Mammary epithelial cell (primary cell): ENCODE measurements at regions of chr12 and their contacts with region 1.

Region 1: DNA sequence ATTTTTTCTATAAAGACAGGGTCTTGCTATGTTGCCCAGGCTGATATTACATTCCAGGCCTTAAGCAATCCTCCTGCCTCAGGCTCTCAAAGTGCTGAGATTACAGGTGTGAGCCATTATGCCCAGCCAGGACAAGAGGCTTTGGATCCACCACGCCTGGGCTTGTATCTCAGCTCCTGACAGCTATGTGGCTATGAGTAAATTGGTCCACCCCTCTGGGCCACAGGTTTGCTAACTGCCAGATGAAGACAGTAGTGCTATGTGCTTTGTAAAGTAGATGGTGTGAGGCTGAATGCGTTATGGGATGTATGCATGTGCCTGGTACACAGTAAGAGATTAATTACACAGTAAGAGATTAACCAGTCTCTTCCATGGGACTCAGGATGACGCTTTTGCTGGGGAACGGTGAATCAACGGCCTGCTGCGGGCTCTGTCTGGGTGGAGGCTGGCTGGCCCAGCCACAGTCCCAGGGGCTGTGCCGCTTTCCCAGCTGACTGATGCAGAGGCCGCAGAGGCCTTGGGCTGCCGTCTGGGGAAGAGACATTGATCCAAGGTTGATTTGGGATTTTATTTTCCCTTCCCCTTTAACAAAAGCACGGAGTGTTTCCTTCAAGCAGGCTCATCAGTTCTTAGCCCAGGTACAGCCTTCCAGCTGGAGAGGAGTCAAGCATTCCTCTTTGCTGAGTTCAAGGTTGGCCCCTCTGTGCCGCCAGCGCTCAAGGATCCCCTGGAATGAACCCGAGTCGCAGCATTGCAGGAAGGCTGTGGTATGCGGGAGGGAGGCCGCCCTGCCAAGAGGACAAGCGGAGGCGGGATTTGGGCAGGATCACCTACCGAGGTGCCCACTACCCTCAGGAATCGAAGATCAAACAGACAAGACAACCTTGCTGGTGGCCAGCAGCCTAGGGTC is 53.6 kb upstream of the NCOR2 start:
- DNase-seq: peak; percentile 94
- H3K4me3 ChIP-seq: no peak overlapping the region
- H3K27ac ChIP-seq: peak overlapping the region; percentile 51
- H3K4me1 ChIP-seq: peaks cover 46% of the 10 kb centered on the region
- H3K27me3 ChIP-seq: no peaks in the 10 kb centered on the region
- CTCF ChIP-seq: no peak

Region 2: GRCh38 chr12:123972457-123973401 is 648.3 kb before region 1 on chr12 and contains the starts of genes CCDC92 and ZNF664:
- CTCF ChIA-PET with region 1: no interaction called
- dilution Hi-C with region 1: no loop called
- in situ Hi-C with region 1: no loop called
- intact Hi-C with region 1: no loop called
- DNase-seq: peak; percentile 89
- H3K4me3 ChIP-seq: peak within 1 kb of the TSS; percentile 81 to 98 (median 85)
- H3K27ac ChIP-seq: peak within 1 kb of the TSS; percentile 57
- H3K4me1 ChIP-seq: peaks cover 18% of the 10 kb centered on the region
- H3K27me3 ChIP-seq: no peaks in the 10 kb centered on the region
- CTCF ChIP-seq: peak in 1 of 2 donors; percentile 31
- total RNA-seq, gene CCDC92: 6.8 to 29.7 TPM
- total RNA-seq, gene ZNF664: 56.2 to 62.6 TPM

Region 3: DNA sequence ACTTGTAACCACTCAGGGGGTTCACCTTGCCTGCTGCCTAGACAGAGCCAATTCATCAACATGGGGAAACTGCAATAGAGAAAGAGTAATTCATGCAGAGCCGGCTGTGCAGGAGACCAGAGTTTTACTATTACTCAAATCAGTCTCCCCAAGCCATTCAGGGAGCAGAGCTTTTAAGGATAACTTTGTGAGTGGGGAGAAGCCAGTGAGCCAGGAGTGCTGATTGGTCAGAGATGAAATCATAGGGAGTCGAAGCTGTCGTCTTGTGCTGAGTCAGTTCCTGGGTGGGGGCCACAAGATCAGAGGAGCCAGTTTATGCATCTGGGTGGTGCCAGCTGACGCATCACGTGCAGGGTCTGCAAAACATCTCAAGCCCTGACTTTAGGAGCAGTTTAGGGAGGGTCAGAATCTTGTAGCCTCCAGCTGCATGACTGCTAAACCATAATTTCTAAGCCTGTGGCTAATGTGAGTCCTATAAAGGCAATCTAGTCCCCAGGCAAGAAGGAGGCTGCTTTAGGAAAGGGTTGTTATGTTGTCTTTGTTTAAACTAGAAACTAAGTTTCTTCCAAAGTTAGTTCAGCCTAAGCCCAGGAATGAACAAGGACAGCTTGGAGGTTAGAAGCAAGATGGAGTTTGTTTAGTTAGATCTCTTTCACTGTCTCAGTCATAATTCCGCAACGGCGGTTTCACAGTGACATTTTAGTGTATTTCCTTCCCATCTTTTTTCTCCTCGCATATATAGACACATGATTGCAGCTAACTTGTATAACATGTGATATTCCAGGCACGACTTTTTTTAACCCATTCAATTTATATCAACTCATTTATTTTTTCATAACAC is 15.4 kb after region 1 on chr12:
- CTCF ChIA-PET with region 1: interaction called, 4 read pairs
- dilution Hi-C with region 1: no loop called
- in situ Hi-C with region 1: no loop called
- intact Hi-C with region 1: loop called (anchors 1 kb)
- DNase-seq: peak; percentile 96
- H3K4me3 ChIP-seq: no peak overlapping the region
- H3K27ac ChIP-seq: peak overlapping the region; percentile 71
- H3K4me1 ChIP-seq: peaks cover 64% of the 10 kb centered on the region
- H3K27me3 ChIP-seq: no peaks in the 10 kb centered on the region
- CTCF ChIP-seq: no peak

Region 4: DNA sequence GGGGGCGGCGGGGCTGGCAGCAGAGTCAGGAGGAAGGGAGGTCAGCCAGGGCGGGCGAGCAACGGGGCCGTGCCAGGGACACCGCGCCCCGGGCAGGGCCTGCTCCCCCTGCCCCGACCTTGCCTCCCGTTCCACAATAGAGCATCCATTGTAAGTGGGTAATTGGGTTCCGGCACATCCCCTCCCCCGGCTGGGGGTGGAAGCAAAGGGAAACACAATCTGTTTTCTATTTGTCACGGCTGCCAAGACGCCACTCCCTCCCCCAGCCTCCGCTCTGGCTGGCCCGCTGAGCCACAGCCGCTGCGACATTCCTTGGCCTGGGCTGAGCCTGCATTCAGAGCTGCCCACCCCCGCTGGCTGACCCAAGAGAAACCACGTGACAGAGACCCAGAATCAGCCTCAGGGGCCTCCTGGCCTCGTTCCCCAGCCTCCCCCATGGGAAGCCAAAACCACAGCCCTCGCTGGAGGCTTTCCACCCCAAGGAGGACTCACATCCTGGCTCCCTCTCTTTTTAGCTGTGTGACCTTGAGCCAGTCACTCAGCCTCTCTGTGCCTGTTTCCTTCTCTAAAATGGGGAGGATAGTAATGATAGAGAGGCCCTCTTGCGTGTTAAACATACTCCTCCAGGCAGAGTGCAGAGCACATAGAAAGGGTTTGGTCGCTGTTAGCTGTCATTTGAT is 125.0 kb after region 1 on chr12:
- CTCF ChIA-PET with region 1: interaction called, 3 read pairs
- dilution Hi-C with region 1: no loop called
- in situ Hi-C with region 1: no loop called
- intact Hi-C with region 1: loop called (anchors 5 kb)
- DNase-seq: peak; percentile 77
- H3K4me3 ChIP-seq: no peak overlapping the region
- H3K27ac ChIP-seq: no peak overlapping the region
- H3K4me1 ChIP-seq: peaks cover 23% of the 10 kb centered on the region
- H3K27me3 ChIP-seq: no peaks in the 10 kb centered on the region
- CTCF ChIP-seq: no peak